ENCODE measurements at regions of chr14 and their contacts with region 1.

Region 1: DNA sequence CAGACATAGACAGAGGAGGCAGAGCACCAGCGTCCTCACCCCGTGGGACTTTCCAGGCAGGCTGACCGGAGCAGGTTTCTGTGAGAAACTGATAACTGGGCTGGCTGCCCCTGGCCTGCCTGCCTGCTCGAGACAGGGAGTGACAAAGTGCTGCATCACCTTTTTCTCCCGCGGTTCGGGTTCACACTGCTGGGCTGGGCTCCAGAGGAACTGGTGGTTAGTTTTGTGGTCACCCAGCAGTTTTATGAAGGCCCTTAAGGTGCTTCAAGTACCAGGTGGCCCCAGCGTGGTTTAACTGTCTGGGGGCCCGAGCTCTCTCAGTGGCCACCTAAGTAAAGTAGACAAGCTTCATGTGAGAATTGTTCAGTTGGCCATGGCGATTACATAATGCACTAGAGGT is 1073.6 kb downstream of the BCL11B start:
- DNase-seq: peak in 4 of 9 donors; percentile 25 to 43 (median 32)
- ATAC-seq: peak; percentile 67
- H3K4me3 ChIP-seq: peak overlapping the region; percentile 18
- H3K4me3 Mint-ChIP-seq: peak overlapping the region; percentile 18 to 84 (median 78)
- H3K27ac ChIP-seq: peak overlapping the region; percentile 33
- H3K27ac Mint-ChIP-seq: peak overlapping the region; percentile 74 to 100 (median 97)
- H3K4me1 ChIP-seq: peaks cover 43 to 80% of the 10 kb centered on the region in 2 donors
- H3K4me1 Mint-ChIP-seq: peaks cover 28 to 95% (median 86%) of the 10 kb centered on the region in 7 donors
- H3K27me3 ChIP-seq: no peaks in the 10 kb centered on the region
- H3K27me3 Mint-ChIP-seq: no peaks in the 10 kb centered on the region

Region 2: DNA sequence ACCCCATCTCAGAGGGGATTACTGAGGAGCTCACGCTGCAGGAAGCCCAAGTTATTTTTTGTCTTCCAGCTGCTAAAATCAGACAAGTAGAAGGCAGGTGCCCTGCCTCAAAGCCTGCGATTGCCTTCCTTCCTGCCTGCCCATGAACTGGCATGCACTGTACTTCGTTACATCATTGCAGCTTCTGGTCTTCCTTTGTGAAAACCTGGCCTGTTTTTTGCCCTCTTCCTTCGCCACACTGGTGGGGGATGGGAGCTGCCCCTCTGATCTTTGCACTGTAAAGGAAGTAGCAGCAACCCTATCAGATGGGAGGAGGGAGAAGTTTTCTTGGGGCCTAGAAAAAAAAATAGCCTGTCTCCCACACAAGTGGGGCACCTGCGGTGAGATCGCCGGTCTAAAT is 25.1 kb before region 1 on chr14:
- CTCF ChIA-PET with region 1: interaction called, 11 read pairs
- POLR2A ChIA-PET with region 1: interaction called, 413 read pairs
- intact Hi-C with region 1: no loop called
- DNase-seq: peak in 7 of 9 donors; percentile 71 to 84 (median 82)
- ATAC-seq: peak; percentile 78
- H3K4me3 ChIP-seq: peak overlapping the region; percentile 33
- H3K4me3 Mint-ChIP-seq: peak overlapping the region; percentile 74 to 90 (median 84)
- H3K27ac ChIP-seq: peak overlapping the region; percentile 81
- H3K27ac Mint-ChIP-seq: peak overlapping the region; percentile 89 to 100 (median 97)
- H3K4me1 ChIP-seq: peaks cover 100% of the 10 kb centered on the region in 2 donors
- H3K4me1 Mint-ChIP-seq: peaks cover 59 to 100% (median 99%) of the 10 kb centered on the region in 7 donors
- H3K27me3 ChIP-seq: no peaks in the 10 kb centered on the region
- H3K27me3 Mint-ChIP-seq: no peaks in the 10 kb centered on the region

Region 3: DNA sequence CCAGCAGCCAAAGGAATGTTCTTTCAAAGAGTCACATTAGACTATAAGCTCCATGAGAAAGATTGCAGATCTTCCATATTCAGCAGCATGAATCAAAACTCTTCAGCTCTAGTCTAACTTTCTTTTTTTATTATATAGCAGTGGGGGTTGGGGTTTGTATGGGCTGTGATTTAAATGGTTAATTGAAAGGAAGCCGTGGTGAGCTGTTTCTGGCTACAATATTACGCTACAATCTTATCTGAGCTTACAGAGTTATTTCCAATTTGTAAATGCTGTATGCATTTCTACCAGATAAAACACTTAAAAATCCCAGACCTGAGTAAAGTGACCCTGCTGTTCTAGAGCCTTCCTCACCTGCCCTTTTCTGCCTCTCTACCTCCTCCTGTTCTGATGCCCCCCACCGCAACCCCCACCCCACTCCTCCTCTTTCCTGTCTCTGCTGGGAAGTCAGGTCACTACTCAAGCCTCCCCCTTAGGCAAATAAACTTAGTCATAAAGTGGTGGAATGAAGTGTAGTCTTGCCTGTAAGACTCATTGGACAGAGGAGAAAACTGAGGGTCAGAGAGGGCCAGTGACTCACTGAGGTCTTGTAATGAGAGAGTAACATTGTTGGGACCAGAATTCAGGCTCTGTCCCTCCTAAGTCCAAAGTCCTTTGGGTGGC is 15.9 kb before region 1 on chr14:
- CTCF ChIA-PET with region 1: interaction called, 15 read pairs
- POLR2A ChIA-PET with region 1: interaction called, 136 read pairs
- intact Hi-C with region 1: no loop called
- DNase-seq: peak in 3 of 9 donors; percentile 44 to 58 (median 54)
- ATAC-seq: peak; percentile 28
- H3K4me3 ChIP-seq: peak overlapping the region; percentile 0
- H3K4me3 Mint-ChIP-seq: peak overlapping the region; percentile 46 to 84 (median 68)
- H3K27ac ChIP-seq: peak overlapping the region; percentile 80
- H3K27ac Mint-ChIP-seq: peak overlapping the region; percentile 89 to 100 (median 97)
- H3K4me1 ChIP-seq: peaks cover 75 to 94% of the 10 kb centered on the region in 2 donors
- H3K4me1 Mint-ChIP-seq: peaks cover 52 to 99% (median 95%) of the 10 kb centered on the region in 7 donors
- H3K27me3 ChIP-seq: no peaks in the 10 kb centered on the region
- H3K27me3 Mint-ChIP-seq: no peaks in the 10 kb centered on the region

Region 4: DNA sequence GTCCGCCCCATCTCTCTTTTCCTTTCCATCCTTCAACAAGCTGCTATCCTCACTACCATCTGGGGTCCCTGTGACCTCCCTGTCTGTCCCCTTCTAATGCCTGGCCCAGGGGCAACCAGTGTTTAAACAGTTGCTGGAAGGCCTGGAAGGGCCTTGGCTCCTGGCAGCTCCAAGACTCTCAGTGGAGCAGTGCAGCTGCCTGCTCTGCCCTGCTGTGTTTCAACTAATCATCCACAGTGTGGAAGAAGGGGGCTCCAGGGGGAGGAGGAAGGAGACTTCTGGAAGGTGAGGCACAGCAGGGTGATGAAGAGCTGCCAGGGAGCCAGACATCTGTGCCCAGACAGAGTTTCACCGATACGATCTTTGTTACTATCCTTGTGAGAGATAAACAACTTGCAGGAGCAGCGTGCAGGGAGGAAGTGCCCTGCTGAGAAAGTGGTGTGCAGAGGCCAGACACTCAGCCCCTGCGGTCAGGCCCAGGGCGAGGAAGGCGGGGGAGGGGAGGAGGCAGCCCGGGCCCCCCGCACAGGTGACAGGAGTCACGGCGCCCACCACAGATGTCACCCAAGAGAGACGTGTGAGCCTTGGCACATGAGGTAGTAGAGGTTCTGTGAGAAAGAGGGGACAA is 11.8 kb after region 1 on chr14:
- CTCF ChIA-PET with region 1: interaction called, 16 read pairs
- POLR2A ChIA-PET with region 1: interaction called, 11 read pairs
- intact Hi-C with region 1: loop called (anchors 1 to 2 kb)
- DNase-seq: peak in 5 of 9 donors; percentile 36 to 58 (median 50)
- ATAC-seq: peak; percentile 68
- H3K4me3 ChIP-seq: peak overlapping the region; percentile 34
- H3K4me3 Mint-ChIP-seq: peak overlapping the region; percentile 65 to 86 (median 74)
- H3K27ac ChIP-seq: peak overlapping the region; percentile 83
- H3K27ac Mint-ChIP-seq: peak overlapping the region; percentile 91 to 100 (median 97)
- H3K4me1 ChIP-seq: peaks cover 44 to 82% of the 10 kb centered on the region in 2 donors
- H3K4me1 Mint-ChIP-seq: peaks cover 0 to 95% (median 57%) of the 10 kb centered on the region in 7 donors
- H3K27me3 ChIP-seq: no peaks in the 10 kb centered on the region
- H3K27me3 Mint-ChIP-seq: peaks cover 0 to 1% (median 0%) of the 10 kb centered on the region in 5 donors

Region 5: DNA sequence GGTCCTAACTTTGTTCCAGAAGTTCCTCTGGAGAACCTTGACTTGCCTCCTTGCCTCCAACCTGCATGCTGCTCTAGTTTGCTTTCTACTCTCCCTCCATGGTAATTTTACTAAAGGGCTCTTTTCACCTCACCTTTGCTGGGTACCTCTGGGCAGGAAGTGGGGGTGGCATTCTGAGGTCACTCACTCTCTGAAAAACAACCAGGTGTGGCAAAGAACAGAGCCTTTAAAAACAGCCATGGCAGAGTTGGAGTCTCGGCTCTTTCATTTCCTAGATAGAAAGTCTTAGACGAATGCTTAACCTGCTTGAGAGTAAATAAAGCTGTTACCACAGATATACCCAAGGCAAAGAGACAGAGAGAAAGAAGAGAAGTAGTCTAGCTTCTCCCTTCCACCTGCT is 245.7 kb after region 1 on chr14:
- CTCF ChIA-PET with region 1: no interaction called
- POLR2A ChIA-PET with region 1: interaction called, 3 read pairs
- intact Hi-C with region 1: loop called in 1 of 2 experiments (anchors 1 kb)
- DNase-seq: peak in 7 of 9 donors; percentile 61 to 90 (median 86)
- ATAC-seq: peak; percentile 97
- H3K4me3 ChIP-seq: peak overlapping the region; percentile 26
- H3K4me3 Mint-ChIP-seq: peak overlapping the region; percentile 15 to 93 (median 81)
- H3K27ac ChIP-seq: peak overlapping the region; percentile 63
- H3K27ac Mint-ChIP-seq: peak overlapping the region in 6 of 9 donors; percentile 70 to 100 (median 100)
- H3K4me1 ChIP-seq: peaks cover 17 to 43% of the 10 kb centered on the region in 2 donors
- H3K4me1 Mint-ChIP-seq: peaks cover 0 to 54% (median 32%) of the 10 kb centered on the region in 7 donors
- H3K27me3 ChIP-seq: no peaks in the 10 kb centered on the region
- H3K27me3 Mint-ChIP-seq: no peaks in the 10 kb centered on the region